Transverse colon (tissue), 4 donors: ENCODE measurements at regions of chr2 and their contacts with region 1.

Region 1: GRCh38 chr2:183984871-183985270 is 613.5 kb upstream of the ZNF804A start:
- DNase-seq: no peak
- H3K4me3 ChIP-seq: no peak overlapping the region
- H3K27ac ChIP-seq: no peak overlapping the region
- H3K4me1 ChIP-seq: no peaks in the 10 kb centered on the region
- H3K27me3 ChIP-seq: no peaks in the 10 kb centered on the region
- CTCF ChIP-seq: no peak
- EP300 ChIP-seq: no peak
- POLR2A ChIP-seq: no peak

Region 2: GRCh38 chr2:182345384-182345783 is 1639.5 kb before region 1 on chr2:
- in situ Hi-C with region 1: no loop called
- intact Hi-C with region 1: no loop called
- DNase-seq: no peak
- H3K4me3 ChIP-seq: no peak overlapping the region
- H3K27ac ChIP-seq: no peak overlapping the region
- H3K4me1 ChIP-seq: no peaks in the 10 kb centered on the region
- H3K27me3 ChIP-seq: no peaks in the 10 kb centered on the region
- CTCF ChIP-seq: no peak
- EP300 ChIP-seq: no peak
- POLR2A ChIP-seq: no peak

Region 3: DNA sequence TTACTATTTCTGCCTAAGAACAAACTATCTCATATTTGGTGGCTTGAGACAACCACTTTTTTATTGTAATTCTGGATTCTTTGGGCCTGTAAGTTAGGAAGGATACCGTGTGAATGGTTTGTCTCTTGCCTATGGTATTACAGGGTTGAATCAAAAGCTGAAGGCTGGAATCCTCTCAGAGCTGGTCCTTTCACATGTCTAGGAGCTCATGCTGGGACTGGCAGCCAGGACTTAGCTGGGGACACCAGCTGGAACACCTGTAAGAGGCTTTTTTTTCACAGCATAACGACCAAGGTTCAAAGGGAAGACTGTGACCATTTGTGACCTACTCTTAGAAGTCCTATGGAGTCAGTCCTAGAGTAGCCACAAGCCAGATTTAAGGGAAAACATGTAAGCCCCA is 839.7 kb after region 1 on chr2:
- in situ Hi-C with region 1: no loop called
- intact Hi-C with region 1: no loop called
- DNase-seq: no peak
- H3K4me3 ChIP-seq: no peak overlapping the region
- H3K27ac ChIP-seq: no peak overlapping the region
- H3K4me1 ChIP-seq: no peaks in the 10 kb centered on the region
- H3K27me3 ChIP-seq: no peaks in the 10 kb centered on the region
- CTCF ChIP-seq: no peak
- EP300 ChIP-seq: no peak
- POLR2A ChIP-seq: no peak

Region 4: DNA sequence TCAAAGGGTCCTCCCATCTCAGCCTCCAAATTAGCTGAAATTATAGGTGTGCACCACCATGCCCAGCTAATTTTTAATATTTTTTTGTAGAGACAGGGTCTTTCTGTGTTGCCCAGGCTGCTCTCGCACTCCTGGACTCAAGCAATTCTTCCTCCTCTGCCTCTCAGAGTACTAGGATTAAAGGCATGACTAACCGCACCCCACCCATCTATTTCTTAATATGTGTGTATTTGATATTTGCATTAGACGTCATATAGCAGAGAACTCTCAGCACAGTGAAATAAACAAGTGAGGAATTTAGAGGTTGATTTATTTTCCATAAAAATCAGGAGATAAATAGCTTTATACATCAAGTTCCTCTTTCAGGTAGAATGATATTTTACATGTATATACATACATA is 1967.2 kb after region 1 on chr2:
- in situ Hi-C with region 1: no loop called
- intact Hi-C with region 1: loop called (anchors 5 kb)
- DNase-seq: no peak
- H3K4me3 ChIP-seq: no peak overlapping the region
- H3K27ac ChIP-seq: no peak overlapping the region
- H3K4me1 ChIP-seq: no peaks in the 10 kb centered on the region
- H3K27me3 ChIP-seq: no peaks in the 10 kb centered on the region
- CTCF ChIP-seq: no peak
- EP300 ChIP-seq: no peak
- POLR2A ChIP-seq: no peak